Activated CD4-positive, alpha-beta T cell treated with anti-CD3 and anti-CD28 coated beads, Interleukin-2, amount 10 ng/mL, durations not matched to agents 7 days and 5 days (primary cell): ENCODE measurements at regions of chr16 and their contacts with region 1.

Region 1: GRCh38 chr16:70364399-70364798 is 17.7 kb downstream of the DDX19A start:
- DNase-seq: no peak
- H3K4me3 Mint-ChIP-seq: no peak overlapping the region
- H3K27ac Mint-ChIP-seq: no peak overlapping the region
- H3K4me1 Mint-ChIP-seq: no peaks in the 10 kb centered on the region
- H3K27me3 Mint-ChIP-seq: no peaks in the 10 kb centered on the region

Region 2: GRCh38 chr16:70380861-70381603 is 16.6 kb after region 1 on chr16:
- CTCF ChIA-PET with region 1: interaction called, 12 read pairs
- POLR2A ChIA-PET with region 1: interaction called, 4 read pairs
- DNase-seq: peak; percentile 98
- H3K4me3 Mint-ChIP-seq: peak overlapping the region; percentile 96
- H3K27ac Mint-ChIP-seq: peak overlapping the region; percentile 99
- H3K4me1 Mint-ChIP-seq: peaks cover 22% of the 10 kb centered on the region
- H3K27me3 Mint-ChIP-seq: no peaks in the 10 kb centered on the region